MCF 10A (cell line): ENCODE measurements at regions of chr12 and their contacts with region 1.

Region 1: GRCh38 chr12:130013771-130014484 is 110.1 kb upstream of the TMEM132D start:
- DNase-seq: peak; percentile 57
- H3K4me3 Mint-ChIP-seq: no peak overlapping the region
- H3K27ac Mint-ChIP-seq: no peak overlapping the region
- H3K4me1 Mint-ChIP-seq: peaks cover 4% of the 10 kb centered on the region
- H3K27me3 Mint-ChIP-seq: no peaks in the 10 kb centered on the region
- CTCF ChIP-seq: peak; percentile 60

Region 2: DNA sequence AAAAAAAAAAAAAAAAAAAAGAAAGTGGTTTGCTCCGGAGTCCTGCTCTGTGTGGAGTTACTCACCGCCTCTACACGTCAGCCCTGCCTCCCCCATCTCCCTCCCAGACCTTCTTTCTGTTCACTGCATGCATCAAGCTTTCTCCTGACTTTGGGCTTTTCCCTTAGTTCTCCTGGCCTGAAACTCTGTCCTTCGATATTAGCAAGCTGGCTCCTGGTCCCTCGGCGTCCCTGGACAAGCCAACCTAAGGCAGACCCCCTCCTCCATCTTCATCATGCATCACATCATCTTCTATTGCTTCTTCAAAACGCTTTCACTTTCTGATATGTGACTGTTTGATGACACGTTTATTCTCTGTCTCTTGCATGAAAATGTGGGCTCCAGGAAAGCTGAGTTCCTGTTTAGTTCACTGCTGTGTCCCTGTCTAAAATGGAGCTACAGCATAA is 1230.8 kb before region 1 on chr12:
- CTCF ChIA-PET with region 1: interaction called, 15 read pairs
- POLR2A ChIA-PET with region 1: no interaction called
- intact Hi-C with region 1: loop called (anchors 5 kb)
- DNase-seq: peak; percentile 20
- H3K4me3 Mint-ChIP-seq: no peak overlapping the region
- H3K27ac Mint-ChIP-seq: no peak overlapping the region
- H3K4me1 Mint-ChIP-seq: peaks cover 8% of the 10 kb centered on the region
- H3K27me3 Mint-ChIP-seq: no peaks in the 10 kb centered on the region
- CTCF ChIP-seq: no peak

Region 3: GRCh38 chr12:129193263-129193871 is 820.6 kb before region 1 on chr12:
- CTCF ChIA-PET with region 1: interaction called, 4 read pairs
- POLR2A ChIA-PET with region 1: no interaction called
- intact Hi-C with region 1: loop called (anchors 1 kb)
- DNase-seq: peak; percentile 36
- H3K4me3 Mint-ChIP-seq: no peak overlapping the region
- H3K27ac Mint-ChIP-seq: no peak overlapping the region
- H3K4me1 Mint-ChIP-seq: no peaks in the 10 kb centered on the region
- H3K27me3 Mint-ChIP-seq: no peaks in the 10 kb centered on the region
- CTCF ChIP-seq: peak; percentile 47

Region 4: GRCh38 chr12:129911428-129912049 is 102.4 kb before region 1 on chr12:
- CTCF ChIA-PET with region 1: interaction called, 7 read pairs
- POLR2A ChIA-PET with region 1: no interaction called
- intact Hi-C with region 1: loop called (anchors 2 kb)
- DNase-seq: peak; percentile 65
- H3K4me3 Mint-ChIP-seq: no peak overlapping the region
- H3K27ac Mint-ChIP-seq: no peak overlapping the region
- H3K4me1 Mint-ChIP-seq: peaks cover 4% of the 10 kb centered on the region
- H3K27me3 Mint-ChIP-seq: no peaks in the 10 kb centered on the region
- CTCF ChIP-seq: peak; percentile 80

Region 5: DNA sequence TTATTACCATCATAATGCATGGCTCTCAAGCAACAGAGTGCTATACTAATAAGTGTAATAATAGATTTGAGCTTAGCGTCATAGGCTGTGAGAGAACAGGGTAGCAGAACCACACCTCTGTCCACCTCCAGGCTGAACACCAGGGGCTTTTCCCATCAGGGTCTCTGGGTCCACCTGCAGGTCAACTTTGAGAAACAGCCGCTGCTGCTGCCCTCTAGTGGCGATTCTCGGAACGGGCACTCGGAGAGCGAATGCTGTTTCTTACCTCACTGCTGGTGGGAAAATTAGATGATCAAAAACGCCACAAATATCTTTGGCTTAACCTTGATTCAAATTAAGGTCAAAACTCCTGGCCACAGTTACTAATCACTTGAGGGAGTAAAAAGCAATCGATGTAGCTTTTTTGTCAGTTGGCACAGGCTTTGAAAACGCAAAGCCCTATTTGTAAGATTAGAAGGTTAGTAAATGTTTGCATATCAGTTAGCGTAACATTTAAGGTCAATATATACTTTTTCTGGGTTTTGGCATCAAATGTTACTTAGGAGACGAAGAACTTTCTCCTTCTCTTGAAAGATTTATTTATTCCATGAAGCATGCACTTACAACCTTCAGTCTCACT is 17.8 kb after region 1 on chr12:
- CTCF ChIA-PET with region 1: interaction called, 49 read pairs
- POLR2A ChIA-PET with region 1: no interaction called
- intact Hi-C with region 1: no loop called
- DNase-seq: peak; percentile 58
- H3K4me3 Mint-ChIP-seq: no peak overlapping the region
- H3K27ac Mint-ChIP-seq: no peak overlapping the region
- H3K4me1 Mint-ChIP-seq: no peaks in the 10 kb centered on the region
- H3K27me3 Mint-ChIP-seq: peaks cover 40% of the 10 kb centered on the region
- CTCF ChIP-seq: peak; percentile 90